Posterior vena cava (tissue), 2 donors: ENCODE measurements at regions of chr7 and their contacts with region 1.

Region 1: GRCh38 chr7:112495810-112496462 is 15.1 kb downstream of the LSMEM1 start:
- DNase-seq: no peak

Region 2: GRCh38 chr7:110534241-110534931 is 1961.5 kb before region 1 on chr7:
- intact Hi-C with region 1: no loop called
- DNase-seq: no peak

Region 3: DNA sequence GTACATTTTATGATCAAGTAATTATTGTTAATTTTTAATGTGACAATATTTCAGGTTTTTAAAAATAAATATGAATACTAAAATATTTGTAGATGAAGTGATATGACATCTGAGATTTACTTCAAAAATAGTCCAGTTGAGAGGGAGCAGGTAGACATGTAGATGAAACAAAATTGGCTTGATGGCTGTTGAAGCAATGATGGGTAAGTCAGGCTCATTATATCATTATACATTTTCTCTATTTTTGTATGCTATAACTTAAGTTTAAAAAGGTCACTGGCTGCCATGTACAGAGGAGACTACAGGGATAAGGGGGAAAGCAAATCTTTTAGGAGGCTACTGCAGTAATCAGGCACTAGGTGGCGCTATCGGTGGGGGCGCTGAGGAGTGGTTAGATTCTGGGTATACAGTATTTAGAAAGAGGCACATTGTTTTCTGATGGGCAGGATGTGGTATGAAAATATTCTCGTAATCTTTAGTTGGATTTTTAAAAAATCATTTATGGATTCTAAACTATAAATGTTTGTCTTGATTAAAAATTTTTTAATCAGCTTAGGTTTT is 743.8 kb before region 1 on chr7:
- intact Hi-C with region 1: loop called in 1 of 2 experiments (anchors 10 kb)
- DNase-seq: peak; percentile 84

Region 4: GRCh38 chr7:112400141-112400540 is 95.8 kb before region 1 on chr7:
- intact Hi-C with region 1: loop called in 1 of 2 experiments (anchors 10 kb)
- DNase-seq: no peak